CD8-positive, alpha-beta memory T cell (primary cell): ENCODE measurements at regions of chr12 and their contacts with region 1.

Region 1: GRCh38 chr12:27733052-27733656 is 22.5 kb downstream of the MRPS35 start:
- DNase-seq: peak in 2 of 5 donors; percentile 13 to 19
- H3K4me3 ChIP-seq: no peak overlapping the region
- H3K4me3 Mint-ChIP-seq: no peak overlapping the region
- H3K27ac ChIP-seq: no peak overlapping the region
- H3K27ac Mint-ChIP-seq: peak overlapping the region in 1 of 8 donors; percentile 17
- H3K4me1 ChIP-seq: no peaks in the 10 kb centered on the region
- H3K4me1 Mint-ChIP-seq: peaks cover 0 to 10% (median 0%) of the 10 kb centered on the region in 3 donors
- H3K27me3 ChIP-seq: no peaks in the 10 kb centered on the region
- H3K27me3 Mint-ChIP-seq: no peaks in the 10 kb centered on the region

Region 2: GRCh38 chr12:27689558-27690180 is 43.5 kb before region 1 on chr12:
- CTCF ChIA-PET with region 1: no interaction called
- POLR2A ChIA-PET with region 1: no interaction called
- DNase-seq: no peak
- H3K4me3 ChIP-seq: no peak overlapping the region
- H3K4me3 Mint-ChIP-seq: no peak overlapping the region
- H3K27ac ChIP-seq: no peak overlapping the region
- H3K27ac Mint-ChIP-seq: no peak overlapping the region
- H3K4me1 ChIP-seq: no peaks in the 10 kb centered on the region
- H3K4me1 Mint-ChIP-seq: no peaks in the 10 kb centered on the region
- H3K27me3 ChIP-seq: no peaks in the 10 kb centered on the region
- H3K27me3 Mint-ChIP-seq: peaks cover 0 to 2% of the 10 kb centered on the region in 2 donors

Region 3: GRCh38 chr12:27821259-27821973 is 88.3 kb after region 1 on chr12:
- CTCF ChIA-PET with region 1: interaction called, 18 read pairs
- POLR2A ChIA-PET with region 1: no interaction called
- DNase-seq: peak in 4 of 5 donors; percentile 3 to 42 (median 15)
- H3K4me3 ChIP-seq: peak overlapping the region; percentile 26
- H3K4me3 Mint-ChIP-seq: peak overlapping the region; percentile 32 to 83 (median 79)
- H3K27ac ChIP-seq: no peak overlapping the region
- H3K27ac Mint-ChIP-seq: peak overlapping the region in 7 of 8 donors; percentile 59 to 95 (median 82)
- H3K4me1 ChIP-seq: peaks cover 10% of the 10 kb centered on the region
- H3K4me1 Mint-ChIP-seq: peaks cover 22 to 34% (median 32%) of the 10 kb centered on the region in 3 donors
- H3K27me3 ChIP-seq: no peaks in the 10 kb centered on the region
- H3K27me3 Mint-ChIP-seq: peaks cover under 1 to 6% of the 10 kb centered on the region in 2 donors

Region 4: DNA sequence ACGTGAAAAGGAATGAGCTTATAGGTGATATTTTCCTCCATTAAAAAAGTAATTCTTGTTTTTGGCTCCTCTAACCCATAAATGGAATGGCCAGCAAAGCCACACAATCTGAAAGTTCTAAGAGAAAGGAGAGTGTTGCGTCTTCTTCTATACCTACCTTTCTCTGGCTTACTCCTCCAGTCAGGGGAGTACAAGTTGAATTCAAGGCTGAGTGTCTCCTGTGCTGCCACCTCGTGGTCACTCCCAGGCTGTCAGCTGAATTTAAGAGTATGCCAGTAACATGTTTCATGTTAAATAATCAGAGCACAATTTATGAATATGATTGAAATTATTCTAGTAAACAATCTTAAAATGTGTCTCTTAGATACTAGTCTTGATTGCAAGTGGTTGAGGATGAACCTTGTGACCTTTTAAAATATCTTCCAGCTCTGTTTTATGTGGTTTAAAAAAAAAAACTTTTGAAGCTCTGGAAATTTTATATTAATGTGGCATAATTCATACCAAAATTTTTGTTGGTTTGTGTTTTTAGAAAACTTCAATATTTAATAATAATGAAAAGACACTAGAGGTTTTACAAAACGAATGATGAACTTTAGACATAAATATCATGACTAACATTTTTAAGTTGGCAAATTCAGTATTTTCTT is 207.7 kb after region 1 on chr12:
- CTCF ChIA-PET with region 1: interaction called, 11 read pairs
- POLR2A ChIA-PET with region 1: no interaction called
- DNase-seq: peak; percentile 30 to 71 (median 37)
- H3K4me3 ChIP-seq: no peak overlapping the region
- H3K4me3 Mint-ChIP-seq: no peak overlapping the region
- H3K27ac ChIP-seq: no peak overlapping the region
- H3K27ac Mint-ChIP-seq: no peak overlapping the region
- H3K4me1 ChIP-seq: no peaks in the 10 kb centered on the region
- H3K4me1 Mint-ChIP-seq: no peaks in the 10 kb centered on the region
- H3K27me3 ChIP-seq: no peaks in the 10 kb centered on the region
- H3K27me3 Mint-ChIP-seq: peaks cover 4 to 14% of the 10 kb centered on the region in 2 donors